Caco-2 (cell line): ENCODE measurements at regions of chr7 and their contacts with region 1.

Region 1: GRCh38 chr7:112898432-112899290 is 108.5 kb upstream of the TMEM168 start:
- DNase-seq: peak; percentile 72 to 80
- H3K4me3 ChIP-seq: no peak overlapping the region
- H3K4me3 Mint-ChIP-seq: no peak overlapping the region
- H3K27ac Mint-ChIP-seq: no peak overlapping the region
- H3K4me1 ChIP-seq: peaks cover 4% of the 10 kb centered on the region; the same call in 1 of the 2 replicates
- H3K4me1 Mint-ChIP-seq: no peaks in the 10 kb centered on the region
- H3K27me3 ChIP-seq: no peaks in the 10 kb centered on the region
- H3K27me3 Mint-ChIP-seq: no peaks in the 10 kb centered on the region
- CTCF ChIP-seq: peak; percentile 70 to 76

Region 2: GRCh38 chr7:111741811-111742240 is 1156.8 kb before region 1 on chr7:
- CTCF ChIA-PET with region 1: no interaction called
- POLR2A ChIA-PET with region 1: no interaction called
- intact Hi-C with region 1: loop called (anchors 5 kb)
- DNase-seq: peak; percentile 65 to 67
- H3K4me3 ChIP-seq: no peak overlapping the region
- H3K4me3 Mint-ChIP-seq: no peak overlapping the region
- H3K27ac Mint-ChIP-seq: no peak overlapping the region
- H3K4me1 ChIP-seq: peaks cover 6% of the 10 kb centered on the region; the same call in 1 of the 2 replicates
- H3K4me1 Mint-ChIP-seq: peaks cover 8% of the 10 kb centered on the region
- H3K27me3 ChIP-seq: no peaks in the 10 kb centered on the region
- H3K27me3 Mint-ChIP-seq: no peaks in the 10 kb centered on the region
- CTCF ChIP-seq: peak; percentile 69 to 70

Region 3: DNA sequence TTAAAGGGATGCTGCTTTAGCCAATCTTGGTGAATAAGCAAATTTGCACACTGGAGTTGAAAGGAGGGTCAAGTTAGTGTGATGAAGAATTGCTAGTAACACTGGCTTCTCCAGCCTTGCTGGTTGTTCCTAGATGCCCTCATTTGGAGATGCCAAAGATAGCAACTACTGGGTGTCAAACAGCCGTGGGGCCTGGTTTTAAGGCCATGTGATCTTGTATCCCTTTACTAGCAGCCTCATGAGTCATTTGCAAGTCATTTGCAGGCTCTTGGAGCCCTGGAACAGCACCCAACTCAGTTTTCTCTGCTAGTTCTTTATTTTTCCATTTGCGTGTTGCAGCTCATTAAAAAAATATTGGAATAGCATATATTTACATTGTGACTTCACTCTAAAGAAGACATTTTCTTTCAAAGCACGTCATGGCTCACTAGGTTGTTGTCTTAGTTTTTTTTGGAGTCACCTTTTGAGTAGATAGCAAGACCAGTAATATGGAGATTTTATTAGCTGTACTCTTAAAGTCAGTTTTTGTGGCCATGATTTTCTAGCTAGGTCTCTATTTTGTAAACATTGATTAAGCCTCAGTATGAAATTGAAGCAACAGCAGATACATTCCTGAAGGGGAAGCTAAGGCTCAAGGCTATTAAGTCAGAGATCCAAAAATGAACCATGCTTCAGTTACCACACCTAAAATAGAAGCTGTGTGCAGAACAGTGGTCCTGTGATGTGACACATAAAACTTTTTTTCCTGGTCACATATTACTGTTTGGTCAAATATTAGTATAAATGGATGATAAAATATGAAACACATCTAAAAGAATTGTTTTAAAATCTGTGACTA is 416.6 kb before region 1 on chr7:
- CTCF ChIA-PET with region 1: no interaction called
- POLR2A ChIA-PET with region 1: no interaction called
- intact Hi-C with region 1: loop called (anchors 1 kb)
- DNase-seq: peak; percentile 27 to 41
- H3K4me3 ChIP-seq: no peak overlapping the region
- H3K4me3 Mint-ChIP-seq: no peak overlapping the region
- H3K27ac Mint-ChIP-seq: no peak overlapping the region
- H3K4me1 ChIP-seq: peaks cover 25% of the 10 kb centered on the region
- H3K4me1 Mint-ChIP-seq: peaks cover 13% of the 10 kb centered on the region
- H3K27me3 ChIP-seq: no peaks in the 10 kb centered on the region
- H3K27me3 Mint-ChIP-seq: no peaks in the 10 kb centered on the region
- CTCF ChIP-seq: no peak

Region 4: DNA sequence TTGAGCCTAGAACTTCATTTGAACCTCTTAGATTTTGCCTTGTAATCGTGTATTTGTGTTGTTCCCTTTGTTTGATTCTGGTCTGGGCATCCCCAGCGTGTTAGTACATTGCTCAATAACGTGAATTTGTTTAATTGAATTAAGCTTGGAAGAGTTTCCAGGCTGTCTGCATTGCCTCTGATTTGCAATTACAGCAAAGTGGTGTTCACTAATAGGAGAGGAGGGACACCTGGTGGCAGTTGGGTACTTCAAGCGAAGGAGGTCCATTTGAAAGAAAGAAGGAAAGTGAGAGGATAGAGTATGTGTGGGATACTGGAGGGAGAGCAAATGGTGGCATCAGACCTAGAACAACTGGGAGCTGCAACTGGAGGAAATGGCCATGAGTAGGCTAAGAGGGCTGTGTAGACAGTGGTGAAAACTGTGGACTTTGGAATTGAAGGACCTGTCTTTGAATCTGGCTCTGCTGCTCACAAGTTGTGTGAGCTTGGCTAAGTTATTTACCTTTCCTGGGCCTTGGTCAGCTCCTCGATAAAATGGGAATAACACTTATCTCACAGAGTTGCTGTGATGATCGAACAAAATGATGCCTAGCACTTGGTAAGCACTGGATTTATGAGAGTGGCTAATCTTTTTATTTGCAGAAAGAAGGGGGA is 402.7 kb before region 1 on chr7:
- CTCF ChIA-PET with region 1: no interaction called
- POLR2A ChIA-PET with region 1: no interaction called
- intact Hi-C with region 1: loop called (anchors 1 kb)
- DNase-seq: peak; percentile 62 to 63
- H3K4me3 ChIP-seq: no peak overlapping the region
- H3K4me3 Mint-ChIP-seq: no peak overlapping the region
- H3K27ac Mint-ChIP-seq: no peak overlapping the region
- H3K4me1 ChIP-seq: no peaks in the 10 kb centered on the region
- H3K4me1 Mint-ChIP-seq: peaks cover 13% of the 10 kb centered on the region
- H3K27me3 ChIP-seq: no peaks in the 10 kb centered on the region
- H3K27me3 Mint-ChIP-seq: peaks cover 3% of the 10 kb centered on the region
- CTCF ChIP-seq: peak; percentile 56 to 74

Region 5: DNA sequence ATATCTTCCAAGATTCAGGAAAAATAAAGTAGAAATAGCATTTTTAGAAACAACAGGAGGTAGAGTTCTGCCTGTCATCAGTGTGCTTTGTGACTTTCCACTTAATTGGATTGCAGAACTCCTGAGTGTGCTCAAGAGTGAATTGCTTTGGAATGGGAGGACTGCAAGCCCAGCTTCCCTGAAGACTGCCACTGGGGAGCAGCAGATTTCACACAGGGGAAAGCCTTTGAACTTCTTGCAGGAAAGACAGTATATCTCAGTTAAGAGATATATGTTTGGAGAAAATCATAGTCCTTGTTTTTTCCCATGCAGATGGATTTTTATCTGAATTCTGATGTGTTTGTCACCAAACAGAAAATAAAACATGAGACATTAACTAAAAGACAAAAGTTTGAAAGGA is 232.9 kb before region 1 on chr7:
- CTCF ChIA-PET with region 1: no interaction called
- POLR2A ChIA-PET with region 1: no interaction called
- intact Hi-C with region 1: loop called (anchors 1 kb)
- DNase-seq: peak; percentile 46 to 48
- H3K4me3 ChIP-seq: no peak overlapping the region
- H3K4me3 Mint-ChIP-seq: no peak overlapping the region
- H3K27ac Mint-ChIP-seq: no peak overlapping the region
- H3K4me1 ChIP-seq: no peaks in the 10 kb centered on the region; the same call in 1 of the 2 replicates
- H3K4me1 Mint-ChIP-seq: no peaks in the 10 kb centered on the region
- H3K27me3 ChIP-seq: no peaks in the 10 kb centered on the region
- H3K27me3 Mint-ChIP-seq: no peaks in the 10 kb centered on the region
- CTCF ChIP-seq: peak in 1 of 2 experiments; percentile 53

Region 6: DNA sequence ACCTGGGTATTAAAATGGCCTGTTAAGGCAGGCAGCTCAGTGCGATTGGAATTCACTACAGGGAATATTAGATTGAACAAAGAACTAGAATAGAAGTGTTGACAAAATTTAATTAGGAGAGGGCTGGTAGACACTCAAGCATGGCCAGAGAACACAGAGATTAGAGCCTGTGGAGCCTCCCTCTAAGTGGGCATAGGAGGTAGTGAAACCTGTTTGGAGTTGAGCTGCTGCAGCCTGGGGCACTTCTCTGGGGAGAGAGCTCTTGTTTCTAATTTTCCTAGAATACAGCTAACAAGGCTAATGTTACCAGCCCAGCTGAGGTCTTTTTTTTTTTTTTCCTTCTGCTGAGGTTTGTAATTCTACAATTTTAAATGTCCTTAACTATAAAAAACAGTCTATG is 154.8 kb before region 1 on chr7:
- CTCF ChIA-PET with region 1: no interaction called
- POLR2A ChIA-PET with region 1: no interaction called
- intact Hi-C with region 1: loop called (anchors 10 kb)
- DNase-seq: no peak
- H3K4me3 ChIP-seq: no peak overlapping the region
- H3K4me3 Mint-ChIP-seq: no peak overlapping the region
- H3K27ac Mint-ChIP-seq: no peak overlapping the region
- H3K4me1 ChIP-seq: no peaks in the 10 kb centered on the region
- H3K4me1 Mint-ChIP-seq: no peaks in the 10 kb centered on the region
- H3K27me3 ChIP-seq: no peaks in the 10 kb centered on the region
- H3K27me3 Mint-ChIP-seq: no peaks in the 10 kb centered on the region
- CTCF ChIP-seq: no peak

Region 7: GRCh38 chr7:112789817-112790585 is 108.7 kb before region 1 on chr7 and contains the start of gene TMEM168:
- CTCF ChIA-PET with region 1: no interaction called
- POLR2A ChIA-PET with region 1: no interaction called
- intact Hi-C with region 1: loop called (anchors 5 kb)
- DNase-seq: peak; percentile 88 to 89
- H3K4me3 ChIP-seq: peak within 1 kb of the TSS; percentile 88
- H3K4me3 Mint-ChIP-seq: peak within 1 kb of the TSS; percentile 93
- H3K27ac Mint-ChIP-seq: peak within 1 kb of the TSS; percentile 87
- H3K4me1 ChIP-seq: peaks cover 11% of the 10 kb centered on the region
- H3K4me1 Mint-ChIP-seq: peaks cover 22% of the 10 kb centered on the region
- H3K27me3 ChIP-seq: no peaks in the 10 kb centered on the region
- H3K27me3 Mint-ChIP-seq: no peaks in the 10 kb centered on the region
- CTCF ChIP-seq: no peak
- total RNA-seq, gene TMEM168: 21.9 and 28.9 TPM in 2 replicates

Region 8: GRCh38 chr7:112965513-112965912 is 66.9 kb after region 1 on chr7:
- CTCF ChIA-PET with region 1: no interaction called
- POLR2A ChIA-PET with region 1: no interaction called
- intact Hi-C with region 1: no loop called
- DNase-seq: no peak
- H3K4me3 ChIP-seq: no peak overlapping the region
- H3K4me3 Mint-ChIP-seq: no peak overlapping the region
- H3K27ac Mint-ChIP-seq: no peak overlapping the region
- H3K4me1 ChIP-seq: no peaks in the 10 kb centered on the region
- H3K4me1 Mint-ChIP-seq: no peaks in the 10 kb centered on the region
- H3K27me3 ChIP-seq: no peaks in the 10 kb centered on the region
- H3K27me3 Mint-ChIP-seq: peaks cover 4% of the 10 kb centered on the region
- CTCF ChIP-seq: no peak